Activated naive CD4-positive, alpha-beta T cell treated with anti-CD3 and anti-CD28 coated beads for 36 hours (primary cell): ENCODE measurements at regions of chr15 and their contacts with region 1.

Region 1: DNA sequence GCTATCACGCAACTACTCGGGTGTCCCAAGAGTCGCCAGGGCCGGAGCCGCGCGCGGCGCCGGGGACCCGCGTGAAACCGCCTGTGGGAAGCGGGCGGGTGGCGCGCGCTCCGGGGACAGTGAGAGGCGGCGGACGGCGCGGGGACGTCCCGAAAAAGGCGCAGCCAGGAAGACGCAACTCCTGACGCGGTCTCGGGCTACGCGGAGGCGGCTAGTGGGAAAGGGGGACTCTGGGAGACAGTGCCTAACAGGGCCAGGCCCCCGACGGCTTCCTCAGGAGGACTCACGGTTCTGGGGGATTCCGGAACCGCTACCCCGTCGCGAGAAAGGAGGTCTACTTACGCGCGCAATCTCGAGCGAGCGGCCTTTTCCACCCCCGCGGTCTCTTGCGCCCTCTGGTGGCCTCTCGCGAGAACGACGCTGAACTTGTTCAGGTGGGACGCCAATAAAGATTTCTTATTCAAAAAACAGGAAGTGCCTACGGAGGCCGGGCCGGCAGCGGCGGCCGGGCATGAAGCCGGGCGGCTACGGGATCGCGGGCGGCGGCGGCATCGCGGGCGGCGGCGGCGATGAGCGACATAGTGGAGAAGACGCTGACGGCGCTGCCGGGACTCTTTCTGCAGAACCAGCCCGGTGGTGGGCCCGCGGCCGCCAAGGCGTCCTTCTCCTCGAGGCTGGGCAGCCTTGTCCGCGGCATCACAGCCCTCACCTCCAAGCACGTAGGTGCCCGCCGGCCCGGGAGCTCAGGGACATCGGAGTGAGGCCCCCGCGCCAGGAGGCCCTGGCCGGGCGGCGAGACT is at the start of gene AP4E1:
- DNase-seq: peak; percentile 94
- H3K4me3 Mint-ChIP-seq: peak within 1 kb of the TSS; percentile 92
- H3K27ac Mint-ChIP-seq: peak within 1 kb of the TSS; percentile 99
- H3K4me1 Mint-ChIP-seq: peaks cover 25% of the 10 kb centered on the region
- H3K27me3 Mint-ChIP-seq: no peaks in the 10 kb centered on the region
- total RNA-seq, gene AP4E1: 6.8 to 9.4 TPM

Region 2: DNA sequence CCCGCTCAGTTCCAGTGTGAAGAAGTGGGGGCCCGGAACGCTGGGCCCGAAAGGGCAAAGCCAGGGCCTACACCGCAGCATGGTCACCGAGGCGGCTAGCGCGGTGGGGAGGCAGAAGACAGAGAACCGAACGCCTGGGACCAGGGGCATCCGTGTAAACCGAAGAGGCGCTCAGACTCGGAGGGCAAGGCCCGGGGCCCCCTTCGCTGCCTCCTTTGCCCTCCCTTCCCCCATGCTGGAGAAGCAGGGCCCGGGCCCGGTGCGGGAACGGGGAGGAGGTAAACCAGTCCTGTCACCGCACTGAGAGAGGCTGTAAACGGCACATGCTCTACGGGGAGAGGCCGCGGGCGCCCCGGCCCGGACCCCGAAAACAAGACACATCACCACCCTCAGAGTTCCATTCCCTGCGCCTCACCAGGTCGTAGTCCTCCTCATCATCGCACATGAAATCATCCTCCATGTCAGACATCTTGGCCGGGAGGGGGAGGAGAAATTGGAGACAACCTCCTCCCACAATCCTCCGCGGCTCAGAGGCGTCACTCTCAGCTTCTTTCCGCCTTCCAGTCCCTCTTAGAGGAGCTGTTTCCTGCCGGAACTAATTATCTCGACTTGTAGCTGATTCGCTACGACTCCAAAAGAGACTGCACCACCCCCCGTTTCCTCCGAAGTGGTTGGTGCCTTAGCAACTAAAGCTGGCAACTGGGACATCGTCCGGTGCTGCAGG is 1753.1 kb before region 1 on chr15 and contains the start of gene COPS2:
- CTCF ChIA-PET with region 1: no interaction called
- intact Hi-C with region 1: loop called (anchors 5 kb)
- DNase-seq: peak; percentile 97
- H3K4me3 Mint-ChIP-seq: peak within 1 kb of the TSS; percentile 98
- H3K27ac Mint-ChIP-seq: peak within 1 kb of the TSS; percentile 97
- H3K4me1 Mint-ChIP-seq: peaks cover 41% of the 10 kb centered on the region
- H3K27me3 Mint-ChIP-seq: no peaks in the 10 kb centered on the region
- total RNA-seq, gene COPS2: 79.7 to 86.4 TPM

Region 3: DNA sequence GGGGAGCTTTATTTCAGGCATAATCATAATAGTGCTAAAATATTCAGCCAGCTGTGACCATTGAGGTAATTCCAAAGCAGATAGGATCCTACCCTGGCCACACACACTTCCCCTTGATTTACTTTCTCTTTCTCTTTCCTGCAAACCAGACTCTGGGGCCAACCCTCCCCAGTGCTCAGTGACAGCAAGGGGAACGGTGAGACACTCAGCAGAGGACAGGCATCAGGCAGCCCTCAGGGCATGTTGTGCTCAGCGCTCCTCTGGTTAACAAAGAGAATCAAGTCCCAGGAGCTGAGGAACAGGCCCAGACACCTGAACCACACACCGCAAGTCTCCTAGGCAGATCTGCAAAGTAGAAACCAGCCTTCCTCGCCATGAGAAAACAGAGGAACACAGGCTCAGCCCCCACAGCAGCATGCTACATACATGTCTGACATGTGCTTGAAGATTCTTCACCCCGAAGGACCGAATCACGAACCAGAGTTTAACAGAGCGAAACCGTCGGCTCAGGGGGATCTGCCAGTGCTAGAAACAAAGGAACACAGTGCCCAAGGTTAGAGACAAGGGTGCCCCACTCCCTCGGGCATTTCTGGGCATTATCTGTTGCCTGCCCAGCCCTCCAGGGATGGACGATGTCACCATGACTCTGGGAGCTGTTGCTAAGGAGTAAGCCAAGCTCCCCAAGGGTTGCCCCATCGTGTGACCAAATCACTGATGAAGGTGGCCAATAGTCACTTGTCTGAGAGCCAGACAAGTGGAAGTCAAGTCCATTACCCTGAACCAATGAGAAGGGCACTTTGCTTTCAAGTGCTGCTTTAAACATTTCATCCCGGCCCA is 660.4 kb before region 1 on chr15:
- CTCF ChIA-PET with region 1: no interaction called
- intact Hi-C with region 1: loop called (anchors 2 kb)
- DNase-seq: peak; percentile 88
- H3K4me3 Mint-ChIP-seq: peak overlapping the region; percentile 81
- H3K27ac Mint-ChIP-seq: peak overlapping the region; percentile 99
- H3K4me1 Mint-ChIP-seq: peaks cover 42% of the 10 kb centered on the region
- H3K27me3 Mint-ChIP-seq: no peaks in the 10 kb centered on the region

Region 4: DNA sequence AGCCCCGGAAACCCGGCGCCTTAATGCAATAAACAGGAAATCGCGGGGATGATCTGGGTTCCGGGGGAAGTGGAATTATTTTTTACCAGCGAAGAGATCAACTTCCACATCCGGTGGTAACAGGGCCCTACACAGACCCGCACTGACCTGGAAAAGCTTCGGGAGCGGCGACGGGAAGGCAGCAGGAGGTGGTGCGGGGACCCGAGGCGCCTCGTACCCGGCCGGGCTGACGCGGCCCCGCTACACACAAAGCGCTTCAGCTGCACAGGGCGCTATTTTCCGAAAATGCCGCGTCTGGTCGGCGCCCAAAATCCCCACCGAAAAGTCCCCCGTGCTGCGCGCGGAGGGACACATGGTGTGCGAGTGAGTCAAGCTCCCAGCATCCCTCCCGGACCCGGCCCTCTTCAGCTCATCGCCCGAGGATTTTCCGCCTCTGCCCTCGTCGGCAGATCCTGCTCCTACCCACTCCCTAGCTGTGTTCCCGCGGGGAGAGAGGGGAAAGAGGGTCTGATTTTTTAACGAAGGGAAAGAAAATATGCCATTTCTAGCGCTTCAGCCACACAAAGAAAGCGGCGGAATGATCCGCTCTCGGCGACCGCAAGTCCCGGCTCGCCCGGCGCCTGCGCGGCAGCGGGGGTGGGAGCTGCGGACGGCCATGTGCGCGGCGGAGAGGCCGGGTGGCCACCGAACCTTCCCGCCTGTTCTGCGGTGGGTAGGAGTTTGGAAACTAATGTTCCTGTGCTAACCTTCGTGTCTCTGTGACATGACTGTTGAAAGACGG is 553.4 kb before region 1 on chr15 and contains the start of gene GABPB1:
- CTCF ChIA-PET with region 1: interaction called, 3 read pairs
- intact Hi-C with region 1: loop called (anchors 1 kb)
- DNase-seq: peak; percentile 90
- H3K4me3 Mint-ChIP-seq: peak within 1 kb of the TSS; percentile 98
- H3K27ac Mint-ChIP-seq: peak within 1 kb of the TSS; percentile 100
- H3K4me1 Mint-ChIP-seq: peaks cover 50% of the 10 kb centered on the region
- H3K27me3 Mint-ChIP-seq: no peaks in the 10 kb centered on the region
- total RNA-seq, gene GABPB1: 48.2 to 53.5 TPM

Region 5: DNA sequence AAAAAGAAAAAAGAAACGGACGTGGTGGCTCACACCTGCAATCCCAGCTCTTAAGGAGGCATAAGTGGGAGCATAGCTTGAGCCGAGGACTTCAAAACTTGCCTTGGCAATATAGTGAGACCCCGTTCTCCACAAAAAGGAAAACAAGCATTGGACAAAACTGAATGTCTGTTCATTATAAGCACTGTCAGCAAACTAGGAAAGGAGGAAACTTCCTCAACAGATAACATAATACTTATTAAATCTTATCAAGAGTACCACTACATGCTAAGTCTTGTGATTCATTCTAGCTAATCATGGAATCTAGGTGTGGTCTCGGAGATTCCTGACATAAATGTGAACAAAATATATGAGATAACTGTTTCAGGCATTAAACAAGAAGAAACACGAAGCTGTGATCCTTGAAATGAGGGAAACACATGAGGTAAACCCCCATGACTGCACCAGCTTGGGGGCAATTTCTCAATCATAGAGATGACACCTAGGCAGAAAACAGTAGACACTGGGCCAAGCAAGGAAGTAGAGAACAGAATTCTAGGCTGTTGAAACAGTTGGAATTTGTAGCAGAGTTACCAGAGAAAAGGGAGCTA is 255.2 kb before region 1 on chr15:
- CTCF ChIA-PET with region 1: interaction called, 7 read pairs
- intact Hi-C with region 1: loop called (anchors 1 kb)
- DNase-seq: no peak
- H3K4me3 Mint-ChIP-seq: no peak overlapping the region
- H3K27ac Mint-ChIP-seq: peak overlapping the region; percentile 47
- H3K4me1 Mint-ChIP-seq: peaks cover 19% of the 10 kb centered on the region
- H3K27me3 Mint-ChIP-seq: no peaks in the 10 kb centered on the region

Region 6: DNA sequence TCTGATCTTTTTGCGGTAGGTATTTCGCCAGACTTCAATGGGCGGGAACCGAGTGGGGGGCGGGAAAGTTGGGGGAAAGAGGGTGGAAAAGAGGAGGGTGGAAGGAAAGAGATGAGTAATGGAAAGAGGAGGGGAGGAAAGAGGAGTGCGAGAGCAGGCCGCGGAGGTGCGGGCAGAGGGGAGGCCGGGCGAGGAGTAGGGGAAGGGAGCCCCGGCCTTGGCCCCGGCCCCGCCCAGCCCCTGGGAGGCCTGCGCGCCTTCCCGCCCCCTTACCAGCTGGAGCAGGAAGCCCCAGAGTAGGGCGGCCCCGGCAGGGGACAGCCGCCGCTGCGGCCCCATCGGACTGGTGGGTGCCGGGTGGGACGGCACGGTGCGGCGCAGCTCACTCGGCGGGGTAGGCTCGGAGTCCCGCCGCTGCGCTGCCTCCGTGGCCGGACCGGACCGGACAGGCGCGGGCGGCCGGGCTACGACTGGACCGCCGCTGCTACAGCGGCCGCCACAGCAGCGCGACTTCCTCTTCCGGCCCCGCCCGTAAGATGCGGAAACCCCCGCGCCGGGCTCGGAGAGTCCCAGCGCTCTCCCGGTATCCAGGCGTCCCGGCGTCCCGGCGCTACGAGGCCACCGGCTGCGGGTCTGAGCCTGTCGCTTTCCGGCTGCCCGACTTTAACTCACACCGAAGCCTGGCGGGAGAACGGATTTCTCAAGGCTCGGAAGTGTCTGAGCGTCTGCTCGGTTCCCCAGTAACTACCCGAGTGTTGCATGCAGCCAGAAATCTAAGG is 143.0 kb before region 1 on chr15 and contains the start of gene SPPL2A:
- CTCF ChIA-PET with region 1: interaction called, 4 read pairs
- intact Hi-C with region 1: loop called (anchors 1 kb)
- DNase-seq: peak; percentile 93
- H3K4me3 Mint-ChIP-seq: peak within 1 kb of the TSS; percentile 90
- H3K27ac Mint-ChIP-seq: peak within 1 kb of the TSS; percentile 99
- H3K4me1 Mint-ChIP-seq: peaks cover 55% of the 10 kb centered on the region
- H3K27me3 Mint-ChIP-seq: no peaks in the 10 kb centered on the region
- total RNA-seq, gene SPPL2A: 37.7 to 41.6 TPM

Region 7: GRCh38 chr15:51144021-51144532 is 235.7 kb after region 1 on chr15:
- CTCF ChIA-PET with region 1: no interaction called
- intact Hi-C with region 1: no loop called
- DNase-seq: no peak
- H3K4me3 Mint-ChIP-seq: no peak overlapping the region
- H3K27ac Mint-ChIP-seq: no peak overlapping the region
- H3K4me1 Mint-ChIP-seq: no peaks in the 10 kb centered on the region
- H3K27me3 Mint-ChIP-seq: peaks cover 11% of the 10 kb centered on the region

Region 8: GRCh38 chr15:51737280-51738017 is 829.0 kb after region 1 on chr15 and contains the start of gene LYSMD2:
- CTCF ChIA-PET with region 1: no interaction called
- intact Hi-C with region 1: loop called (anchors 5 kb)
- DNase-seq: peak; percentile 66
- H3K4me3 Mint-ChIP-seq: peak within 1 kb of the TSS; percentile 82
- H3K27ac Mint-ChIP-seq: peak within 1 kb of the TSS; percentile 91
- H3K4me1 Mint-ChIP-seq: peaks cover 54% of the 10 kb centered on the region
- H3K27me3 Mint-ChIP-seq: no peaks in the 10 kb centered on the region
- total RNA-seq, gene LYSMD2: 14.5 to 16.8 TPM